ENCODE measurements at regions of chr15 and their contacts with region 1.

Region 1: GRCh38 chr15:40893733-40894688 is at the start of gene VPS18:
- DNase-seq: peak; percentile 99
- ATAC-seq: peak; percentile 98 to 99
- total RNA-seq, gene VPS18: 17.1 to 23.7 TPM

Region 2: DNA sequence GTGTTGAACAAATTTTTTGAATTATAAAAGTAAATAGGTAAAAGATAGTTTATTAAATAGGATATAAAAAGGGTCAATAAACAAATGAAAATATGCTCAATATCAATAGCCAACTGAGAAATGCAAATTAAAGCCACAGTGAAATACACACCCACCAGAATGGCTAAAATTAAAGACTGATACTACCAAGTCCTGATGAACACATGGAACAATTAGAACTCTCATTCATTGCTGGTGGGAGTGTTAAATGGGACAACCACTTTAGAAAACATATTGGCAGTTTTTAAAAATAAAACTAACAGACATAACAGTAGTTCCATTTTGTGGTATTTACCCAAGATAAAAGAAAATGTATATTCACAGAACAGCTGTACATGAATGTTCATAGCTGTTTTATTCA is 370.4 kb before region 1 on chr15:
- intact Hi-C with region 1: loop called in 1 of 2 experiments (anchors 5 kb)
- DNase-seq: no peak
- ATAC-seq: no peak

Region 3: GRCh38 chr15:40684381-40684780 is 209.6 kb before region 1 on chr15:
- intact Hi-C with region 1: loop called in 1 of 2 experiments (anchors 5 kb)
- DNase-seq: no peak
- ATAC-seq: no peak

Region 4: DNA sequence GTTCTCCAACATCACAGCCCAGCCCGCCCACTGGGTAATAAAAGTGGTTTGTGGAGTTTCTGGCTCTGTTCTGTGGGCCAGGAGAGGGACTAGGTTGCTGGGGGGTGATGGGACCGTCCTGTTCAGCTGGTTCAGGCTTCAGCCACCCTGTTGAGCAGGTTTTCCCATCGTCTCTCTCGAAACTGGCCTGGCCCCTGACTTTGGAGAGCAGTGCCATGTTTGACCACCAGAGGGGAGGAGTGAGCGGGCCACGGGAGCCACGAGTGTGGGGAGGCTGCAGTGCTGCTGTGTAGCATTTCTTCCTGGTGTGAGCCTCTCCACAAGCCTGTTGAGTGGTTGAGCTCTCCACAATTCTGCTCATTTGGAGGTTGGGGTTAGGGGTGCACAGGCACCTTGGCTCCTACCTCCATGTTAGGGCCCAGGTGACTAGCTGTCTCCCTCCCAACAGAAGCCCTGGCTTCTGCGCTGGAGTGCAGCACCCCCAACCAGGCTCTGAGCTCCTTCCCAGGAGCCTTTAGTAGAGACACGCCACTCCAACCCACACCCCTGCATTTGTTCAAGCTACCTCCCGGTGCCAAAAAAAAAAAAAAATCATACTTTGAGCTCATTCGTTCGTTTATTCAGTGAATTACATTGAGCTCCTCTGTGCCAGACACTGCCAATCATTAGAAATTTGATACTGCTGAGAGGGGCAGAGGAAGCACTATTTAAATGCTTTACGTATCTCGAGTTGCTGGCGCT is 36.2 kb before region 1 on chr15:
- intact Hi-C with region 1: loop called in 1 of 2 experiments (anchors 2 kb)
- DNase-seq: peak; percentile 70
- ATAC-seq: peak; percentile 86 to 87

Measured in left cardiac atrium (tissue), 4 donors.